Left colon (tissue), 2 donors: ENCODE measurements at regions of chr3 and their contacts with region 1.

Region 1: DNA sequence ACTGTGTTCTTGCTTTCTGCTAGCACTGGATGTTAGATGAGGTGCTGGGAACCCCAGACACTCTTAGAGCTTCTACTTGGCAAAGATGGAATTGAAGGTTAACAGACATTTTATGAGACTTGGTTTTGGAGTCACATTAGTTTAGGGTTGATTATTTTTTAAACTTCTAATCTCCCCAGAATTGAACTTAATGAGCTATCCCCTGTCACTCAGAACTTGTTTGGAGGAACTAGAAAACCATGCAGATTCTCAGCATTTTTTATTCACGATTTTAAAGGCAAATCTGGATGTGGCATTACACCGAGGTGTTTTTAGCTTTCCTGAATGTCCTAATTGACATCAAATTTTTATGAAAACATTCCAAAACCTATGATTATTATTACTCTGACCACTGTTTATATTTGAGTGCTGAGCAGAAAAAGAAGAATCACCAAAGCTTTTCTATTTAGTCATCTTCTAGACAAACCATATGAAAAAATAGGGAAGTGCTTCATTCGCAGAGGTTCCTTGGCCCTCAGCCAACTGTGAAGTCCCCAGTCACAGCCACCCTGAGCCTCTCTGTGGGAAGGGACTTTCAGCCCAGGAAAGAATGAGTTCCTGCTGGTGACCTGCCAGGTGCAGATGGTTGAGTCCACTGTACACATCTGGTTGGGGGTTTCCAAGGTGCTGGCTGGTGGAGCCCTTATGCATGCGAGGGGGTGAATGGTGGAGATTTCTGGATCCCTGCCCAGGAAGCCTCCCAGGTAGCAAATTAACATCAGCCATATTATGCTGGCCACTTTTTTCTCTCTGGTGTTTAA is 196.0 kb upstream of the TOPAZ1 start:
- DNase-seq: peak; percentile 58 to 61
- ATAC-seq: peak; percentile 40

Region 2: DNA sequence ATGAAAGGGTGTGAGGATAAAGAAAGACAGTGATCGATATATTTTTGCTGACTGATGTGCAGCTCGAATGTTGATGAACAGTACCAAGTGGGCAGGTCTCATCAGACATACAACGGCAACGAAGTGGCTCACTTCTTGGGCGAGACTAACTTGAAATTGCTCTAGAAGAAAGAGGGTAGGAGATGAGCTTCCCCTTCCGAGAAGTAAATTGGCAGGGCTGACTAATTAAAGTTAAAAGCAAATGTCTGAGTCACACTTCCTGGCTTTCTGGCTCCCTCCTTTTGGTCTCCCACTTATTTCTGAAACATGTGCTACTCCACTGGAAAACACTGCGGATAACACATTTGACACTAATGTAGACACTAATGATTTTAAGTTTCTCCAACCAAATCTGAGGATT is 126.6 kb before region 1 on chr3:
- intact Hi-C with region 1: no loop called
- DNase-seq: no peak
- ATAC-seq: no peak

Region 3: GRCh38 chr3:44013967-44014366 is 31.7 kb before region 1 on chr3:
- intact Hi-C with region 1: loop called in 1 of 2 experiments (anchors 5 kb)
- DNase-seq: no peak
- ATAC-seq: no peak